Gastrocnemius medialis (tissue), 4 donors: ENCODE measurements at regions of chr6 and their contacts with region 1.

Region 1: GRCh38 chr6:3751730-3752542 is 423 bp upstream of the PXDC1 start:
- DNase-seq: peak; percentile 74 to 76
- ATAC-seq: peak; percentile 56 to 75
- H3K4me3 ChIP-seq: peak overlapping the region; percentile 72 to 94 (median 78)
- H3K27ac ChIP-seq: peak overlapping the region; percentile 89 to 96 (median 90)
- H3K4me1 ChIP-seq: peaks cover 19 to 31% of the 10 kb centered on the region in 2 donors
- H3K27me3 ChIP-seq: no peaks in the 10 kb centered on the region
- CTCF ChIP-seq: peak in 4 of 5 experiments; percentile 25 to 49 (median 42)
- POLR2A ChIP-seq: peak; percentile 87 to 90

Region 2: DNA sequence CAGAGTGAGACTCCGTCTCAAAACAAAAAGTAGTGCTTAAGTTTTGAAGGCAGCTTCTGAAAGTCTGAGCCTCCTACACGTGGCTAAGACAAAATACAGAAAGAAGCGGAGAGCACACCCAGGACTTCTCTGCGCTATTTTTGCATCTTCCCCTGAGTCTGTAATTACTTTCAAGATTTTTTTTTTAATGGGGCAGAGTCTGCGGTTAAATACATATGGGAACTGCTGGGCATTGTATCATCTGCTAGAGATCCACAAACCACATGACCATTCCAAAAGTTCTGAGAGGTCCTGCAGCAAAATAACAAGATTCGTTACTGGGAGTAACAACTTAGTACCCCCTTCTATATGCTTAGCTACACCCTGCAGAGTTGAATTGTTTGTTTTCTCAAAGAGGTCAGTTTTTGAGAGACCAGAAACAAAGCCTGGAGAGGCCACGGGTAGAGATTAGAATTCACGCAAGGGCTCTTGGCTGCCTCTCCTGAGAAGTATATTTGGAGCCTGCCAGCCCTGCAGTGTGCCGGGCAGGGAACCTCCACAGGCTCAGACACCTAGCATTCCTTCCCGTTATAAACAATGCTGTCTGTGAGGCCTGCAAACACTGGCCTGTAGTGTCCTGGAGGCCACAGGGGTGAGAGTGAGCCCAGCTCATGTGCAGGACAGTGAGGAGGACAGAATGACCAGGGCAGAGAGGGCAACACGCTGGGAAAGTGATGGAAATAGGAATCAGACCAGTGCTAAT is 49.1 kb after region 1 on chr6:
- in situ Hi-C with region 1: no loop called
- intact Hi-C with region 1: loop called (anchors 5 kb)
- DNase-seq: no peak
- ATAC-seq: no peak
- H3K4me3 ChIP-seq: no peak overlapping the region
- H3K27ac ChIP-seq: peak overlapping the region in 1 of 4 donors; percentile 25
- H3K4me1 ChIP-seq: peaks cover 5 to 24% of the 10 kb centered on the region in 2 donors
- H3K27me3 ChIP-seq: no peaks in the 10 kb centered on the region
- CTCF ChIP-seq: no peak
- POLR2A ChIP-seq: no peak

Region 3: GRCh38 chr6:3825851-3826581 is 74.1 kb after region 1 on chr6:
- in situ Hi-C with region 1: loop called in 1 of 4 experiments (anchors 5 kb)
- intact Hi-C with region 1: loop called (anchors 1 kb)
- DNase-seq: peak; percentile 74 to 84
- ATAC-seq: peak; percentile 84 to 92
- H3K4me3 ChIP-seq: peak overlapping the region; percentile 33 to 42 (median 39)
- H3K27ac ChIP-seq: peak overlapping the region; percentile 86 to 92 (median 90)
- H3K4me1 ChIP-seq: peaks cover 23 to 25% of the 10 kb centered on the region in 2 donors
- H3K27me3 ChIP-seq: no peaks in the 10 kb centered on the region
- CTCF ChIP-seq: no peak
- POLR2A ChIP-seq: peak in 1 of 2 donors; percentile 56

Region 4: GRCh38 chr6:3835055-3835731 is 83.3 kb after region 1 on chr6:
- in situ Hi-C with region 1: loop called in 2 of 4 experiments (anchors 5 kb)
- intact Hi-C with region 1: no loop called
- DNase-seq: peak; percentile 74 to 86
- ATAC-seq: peak; percentile 97
- H3K4me3 ChIP-seq: no peak overlapping the region
- H3K27ac ChIP-seq: peak overlapping the region; percentile 62 to 79 (median 68)
- H3K4me1 ChIP-seq: peaks cover 18 to 19% of the 10 kb centered on the region in 2 donors
- H3K27me3 ChIP-seq: no peaks in the 10 kb centered on the region
- CTCF ChIP-seq: peak in 2 of 5 experiments; percentile 15 to 37
- POLR2A ChIP-seq: no peak

Region 5: GRCh38 chr6:3887150-3887700 is 135.3 kb after region 1 on chr6:
- in situ Hi-C with region 1: loop called in 1 of 4 experiments (anchors 5 kb)
- intact Hi-C with region 1: loop called (anchors 1 kb)
- DNase-seq: peak in 1 of 2 donors; percentile 12
- ATAC-seq: no peak
- H3K4me3 ChIP-seq: no peak overlapping the region
- H3K27ac ChIP-seq: peak overlapping the region in 3 of 4 donors; percentile 48 to 70 (median 57)
- H3K4me1 ChIP-seq: peaks cover 36 to 46% of the 10 kb centered on the region in 2 donors
- H3K27me3 ChIP-seq: no peaks in the 10 kb centered on the region
- CTCF ChIP-seq: peak in 4 of 5 experiments; percentile 42 to 60 (median 52)
- POLR2A ChIP-seq: no peak

Region 6: GRCh38 chr6:3929281-3929798 is 177.4 kb after region 1 on chr6:
- in situ Hi-C with region 1: loop called in 3 of 4 experiments (anchors 5 to 10 kb)
- intact Hi-C with region 1: no loop called
- DNase-seq: no peak
- ATAC-seq: peak in 1 of 2 donors; percentile 10
- H3K4me3 ChIP-seq: no peak overlapping the region
- H3K27ac ChIP-seq: peak overlapping the region; percentile 54 to 74 (median 65)
- H3K4me1 ChIP-seq: peaks cover 16 to 20% of the 10 kb centered on the region in 2 donors
- H3K27me3 ChIP-seq: no peaks in the 10 kb centered on the region
- CTCF ChIP-seq: no peak
- POLR2A ChIP-seq: no peak

Region 7: GRCh38 chr6:3990692-3991501 is 239.0 kb after region 1 on chr6:
- in situ Hi-C with region 1: loop called in 2 of 4 experiments (anchors 5 kb)
- intact Hi-C with region 1: no loop called
- DNase-seq: peak; percentile 67 to 77
- ATAC-seq: peak; percentile 83 to 89
- H3K4me3 ChIP-seq: peak overlapping the region; percentile 52 to 58 (median 55)
- H3K27ac ChIP-seq: peak overlapping the region; percentile 47 to 60 (median 54)
- H3K4me1 ChIP-seq: peaks cover 10 to 12% of the 10 kb centered on the region in 2 donors
- H3K27me3 ChIP-seq: no peaks in the 10 kb centered on the region
- CTCF ChIP-seq: peak; percentile 63 to 76 (median 70)
- POLR2A ChIP-seq: no peak

Region 8: DNA sequence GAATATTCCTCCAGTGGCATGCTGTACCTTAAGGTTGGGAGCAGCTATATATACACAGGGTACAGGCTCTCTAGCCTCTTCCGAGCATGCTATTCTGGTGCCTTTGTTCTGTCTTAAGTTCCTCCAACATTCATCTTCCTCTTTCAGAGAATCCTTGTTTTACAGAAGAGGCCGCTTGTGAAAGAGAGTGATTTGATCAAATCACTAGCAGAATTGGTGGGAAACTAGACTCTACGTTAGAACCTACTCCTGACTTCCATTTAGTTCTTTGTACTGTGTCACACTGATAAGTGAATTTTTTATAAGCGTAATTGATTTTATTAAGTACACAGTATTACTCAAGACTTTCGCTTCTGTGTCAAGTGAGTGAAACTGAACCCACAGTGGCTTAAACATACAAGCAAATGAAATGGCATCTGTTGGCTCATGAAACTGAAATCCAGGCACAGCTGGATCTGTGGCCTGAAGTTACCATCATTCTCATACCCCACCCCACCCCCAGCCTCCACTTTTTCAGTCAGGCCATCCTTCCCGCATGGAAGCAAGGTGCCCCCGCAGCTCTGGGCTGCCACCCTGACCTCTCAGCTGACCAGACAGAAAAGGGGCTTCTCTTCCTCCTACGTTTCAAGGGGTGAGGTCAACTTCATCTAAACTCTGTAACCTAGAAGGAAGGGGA is 1149.6 kb after region 1 on chr6:
- in situ Hi-C with region 1: no loop called
- intact Hi-C with region 1: no loop called
- DNase-seq: no peak
- ATAC-seq: no peak
- H3K4me3 ChIP-seq: no peak overlapping the region
- H3K27ac ChIP-seq: no peak overlapping the region
- H3K4me1 ChIP-seq: peaks cover 12 to 19% of the 10 kb centered on the region in 2 donors
- H3K27me3 ChIP-seq: no peaks in the 10 kb centered on the region
- CTCF ChIP-seq: no peak
- POLR2A ChIP-seq: no peak